AG04450 (cell line): ENCODE measurements at regions of chr6 and their contacts with region 1.

Region 1: GRCh38 chr6:2534406-2535042 is 216.2 kb downstream of the MYLK4 start:
- DNase-seq: no peak
- H3K4me3 ChIP-seq: no peak overlapping the region
- H3K27ac ChIP-seq: no peak overlapping the region
- H3K27me3 ChIP-seq: peaks cover 23% of the 10 kb centered on the region
- CTCF ChIP-seq: no peak

Region 2: DNA sequence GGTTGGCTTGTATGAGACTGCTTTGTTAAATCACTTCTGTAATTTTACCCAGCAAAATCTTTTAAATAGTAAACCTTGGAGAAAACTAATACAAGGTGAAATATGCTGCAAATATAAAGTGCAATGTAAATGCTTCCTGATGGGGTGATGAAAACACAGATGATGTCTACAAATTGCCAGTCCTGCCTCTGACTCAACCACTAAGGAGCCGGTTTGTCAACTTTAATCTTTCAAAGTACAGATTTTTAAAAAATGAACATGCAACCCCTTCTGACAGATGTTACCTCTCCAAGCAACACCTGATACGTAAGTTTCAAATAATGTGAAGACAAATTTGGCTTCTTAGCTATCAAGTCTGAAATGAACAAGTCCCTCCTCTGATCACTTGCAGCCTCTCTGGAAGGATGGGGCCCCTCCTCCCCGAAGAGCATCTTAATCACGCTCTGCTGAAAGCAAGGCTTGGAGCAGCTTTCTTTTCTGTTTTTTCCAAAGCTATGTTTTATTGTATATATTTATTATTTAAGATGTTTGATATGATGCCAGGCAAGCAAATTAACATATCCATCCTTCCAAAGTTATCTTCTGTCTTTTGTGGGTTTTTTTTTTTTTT is 20.2 kb after region 1 on chr6:
- CTCF ChIA-PET with region 1: interaction called, 12 read pairs
- POLR2A ChIA-PET with region 1: interaction called, 7 read pairs
- DNase-seq: no peak
- H3K4me3 ChIP-seq: no peak overlapping the region
- H3K27ac ChIP-seq: no peak overlapping the region
- H3K27me3 ChIP-seq: peaks cover 5% of the 10 kb centered on the region
- CTCF ChIP-seq: no peak

Region 3: GRCh38 chr6:2680264-2680922 is 145.9 kb after region 1 on chr6:
- CTCF ChIA-PET with region 1: no interaction called
- POLR2A ChIA-PET with region 1: no interaction called
- DNase-seq: no peak
- H3K4me3 ChIP-seq: no peak overlapping the region
- H3K27ac ChIP-seq: no peak overlapping the region
- H3K27me3 ChIP-seq: no peaks in the 10 kb centered on the region
- CTCF ChIP-seq: no peak